Heart right ventricle (tissue), 16 donors: ENCODE measurements at regions of chr19 and their contacts with region 1.

Region 1: DNA sequence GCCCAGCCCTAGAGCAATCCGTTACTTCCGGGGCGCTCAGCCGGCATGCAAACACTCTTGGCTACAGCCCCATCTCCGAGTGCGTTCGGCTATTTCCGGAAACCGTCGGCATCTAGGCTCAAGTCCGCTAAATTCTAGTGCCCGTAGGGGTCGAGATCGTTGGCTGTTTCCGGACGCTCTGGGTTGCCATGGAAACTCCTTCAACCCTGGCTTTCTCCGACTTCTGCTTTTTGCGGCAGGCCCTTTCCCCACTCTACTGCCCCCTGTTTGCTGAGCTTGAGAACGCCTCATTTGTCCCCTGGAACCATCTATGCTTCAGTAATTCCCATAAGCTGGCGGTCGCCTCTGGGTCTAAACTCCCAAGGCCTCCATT is 533 bp upstream of the PIK3R2 start:
- DNase-seq: peak; percentile 97
- ATAC-seq: peak; percentile 52 to 87 (median 74)
- H3K4me3 ChIP-seq: peak overlapping the region; percentile 37 to 96 (median 89)
- H3K27ac ChIP-seq: peak overlapping the region; percentile 63 to 97 (median 94)
- H3K4me1 ChIP-seq: peaks cover 10 to 44% (median 35%) of the 10 kb centered on the region in 9 donors
- H3K27me3 ChIP-seq: no peaks in the 10 kb centered on the region
- CTCF ChIP-seq: peak; percentile 30 to 79 (median 63)

Region 2: DNA sequence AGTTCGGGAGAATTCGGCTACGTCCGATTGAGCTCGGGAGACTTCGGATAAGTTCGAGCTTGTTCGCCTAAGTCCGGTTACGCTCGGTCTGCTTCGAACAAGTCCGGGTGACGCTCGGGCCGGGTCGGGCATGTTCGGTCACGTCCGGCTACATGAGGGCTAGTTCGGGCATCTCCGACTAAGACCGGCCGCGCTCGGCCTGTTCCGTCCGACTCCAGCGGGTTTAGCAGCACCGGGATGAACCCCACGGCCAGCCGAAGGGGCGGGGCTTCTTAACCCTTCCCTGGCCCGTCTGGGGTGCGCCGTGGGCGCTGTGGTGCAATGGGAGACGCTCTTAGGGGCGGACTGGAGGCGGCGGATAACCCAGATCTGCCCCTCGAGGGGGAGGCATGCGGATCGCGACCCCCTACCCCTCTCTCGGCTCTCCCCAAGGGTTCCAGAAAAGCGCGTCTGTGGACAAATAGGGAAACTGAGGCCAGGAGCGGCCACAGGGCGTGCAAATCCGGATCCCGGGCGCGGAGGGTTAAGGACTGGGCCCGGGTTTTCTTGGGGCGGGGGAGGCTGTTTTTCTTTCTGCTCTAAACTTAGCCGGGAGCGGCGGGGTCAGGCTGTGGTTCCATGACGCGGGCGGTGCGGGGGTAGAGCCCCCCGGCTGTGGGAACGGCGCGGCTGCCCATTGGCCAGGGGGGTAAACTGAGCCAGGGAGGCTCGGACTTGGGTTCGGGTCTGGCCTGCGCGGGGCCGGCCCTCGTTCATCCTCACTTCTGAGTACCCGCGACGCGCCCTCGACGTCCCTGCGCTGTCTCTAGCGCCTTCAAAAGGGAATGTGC is 72.3 kb after region 1 on chr19:
- intact Hi-C with region 1: loop called in 1 of 10 experiments (anchors 2 kb)
- DNase-seq: peak; percentile 98 to 99
- ATAC-seq: peak; percentile 97 to 99 (median 98)
- H3K4me3 ChIP-seq: peak overlapping the region in 9 of 10 donors; percentile 35 to 65 (median 52)
- H3K27ac ChIP-seq: peak overlapping the region; percentile 50 to 84 (median 71)
- H3K4me1 ChIP-seq: peaks cover 14 to 41% (median 30%) of the 10 kb centered on the region in 9 donors
- H3K27me3 ChIP-seq: peaks cover 9 to 70% (median 64%) of the 10 kb centered on the region in 7 donors
- CTCF ChIP-seq: no peak

Region 3: GRCh38 chr19:18464646-18465045 is 312.2 kb after region 1 on chr19:
- intact Hi-C with region 1: no loop called
- DNase-seq: peak; percentile 76 to 88
- ATAC-seq: peak; percentile 54 to 83 (median 72)
- H3K4me3 ChIP-seq: no peak overlapping the region
- H3K27ac ChIP-seq: peak overlapping the region; percentile 63 to 94 (median 81)
- H3K4me1 ChIP-seq: peaks cover 44 to 88% (median 76%) of the 10 kb centered on the region in 9 donors
- H3K27me3 ChIP-seq: no peaks in the 10 kb centered on the region
- CTCF ChIP-seq: no peak